Panc1 (cell line): ENCODE measurements at regions of chr17 and their contacts with region 1.

Region 1: GRCh38 chr17:49997791-49998703 is 3.0 kb upstream of the DLX3 start:
- DNase-seq: peak; percentile 30
- ATAC-seq: peak; percentile 78
- H3K4me3 ChIP-seq: peak overlapping the region; percentile 13 to 24; a peak in 3 of 4 replicates
- H3K27ac ChIP-seq: peak overlapping the region; percentile 72
- H3K4me1 ChIP-seq: peaks cover 19% of the 10 kb centered on the region
- H3K27me3 ChIP-seq: no peaks in the 10 kb centered on the region
- CTCF ChIP-seq: peak; percentile 96

Region 2: GRCh38 chr17:49575579-49576087 is 422.4 kb before region 1 on chr17 and contains the start of gene NXPH3:
- CTCF ChIA-PET with region 1: no interaction called
- POLR2A ChIA-PET with region 1: no interaction called
- in situ Hi-C with region 1: no loop called
- intact Hi-C with region 1: loop called (anchors 5 kb)
- DNase-seq: no peak
- ATAC-seq: peak; percentile 83
- H3K4me3 ChIP-seq: peak within 1 kb of the TSS; percentile 50 to 69
- H3K27ac ChIP-seq: no peak within 1 kb of the TSS
- H3K4me1 ChIP-seq: peaks cover 11% of the 10 kb centered on the region
- H3K27me3 ChIP-seq: no peaks in the 10 kb centered on the region
- CTCF ChIP-seq: peak; percentile 96
- total RNA-seq, gene NXPH3: 0.57 TPM

Region 3: DNA sequence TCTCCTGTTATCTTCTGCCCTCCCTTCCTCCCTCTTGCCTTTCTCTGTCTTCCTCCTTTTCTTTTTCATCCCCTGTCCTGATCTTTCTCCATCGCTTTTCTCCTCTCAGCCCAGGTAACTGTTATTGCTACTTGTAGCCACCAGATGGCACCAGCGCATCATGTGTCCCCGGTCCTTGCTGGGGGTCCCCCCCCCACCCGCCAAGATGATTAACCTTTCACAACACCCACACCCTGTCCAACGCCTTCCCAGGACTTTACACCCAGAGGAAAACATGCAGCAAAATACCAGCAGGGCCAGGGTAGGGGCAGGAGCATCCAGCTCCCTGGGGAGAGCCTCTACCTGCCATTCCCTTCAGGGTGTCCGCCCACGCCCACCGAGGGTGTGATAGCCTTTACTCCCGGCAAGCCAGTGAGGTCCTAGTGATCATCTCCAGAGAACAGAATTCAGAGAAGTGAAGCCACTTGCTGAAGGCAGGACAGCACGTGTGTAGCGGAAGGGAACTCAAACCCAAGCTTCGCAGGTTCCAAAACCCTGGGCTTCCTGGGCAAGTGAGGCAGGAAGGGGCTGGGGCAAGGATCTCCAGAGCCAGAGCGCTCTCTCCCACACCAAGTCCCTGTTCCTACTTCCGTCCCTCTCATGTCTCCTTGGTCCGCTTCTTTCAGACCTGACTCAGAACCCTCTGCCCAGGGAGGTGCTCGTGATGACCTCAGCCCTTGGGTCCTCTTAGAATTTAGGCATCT is 136.7 kb before region 1 on chr17:
- CTCF ChIA-PET with region 1: interaction called, 55 read pairs
- POLR2A ChIA-PET with region 1: no interaction called
- in situ Hi-C with region 1: no loop called
- intact Hi-C with region 1: loop called (anchors 1 kb)
- DNase-seq: no peak
- ATAC-seq: peak; percentile 55
- H3K4me3 ChIP-seq: no peak overlapping the region
- H3K27ac ChIP-seq: no peak overlapping the region
- H3K4me1 ChIP-seq: peaks cover 3% of the 10 kb centered on the region; the same call in 1 of the 2 replicates
- H3K27me3 ChIP-seq: no peaks in the 10 kb centered on the region
- CTCF ChIP-seq: peak; percentile 93

Region 4: GRCh38 chr17:49899191-49899485 is 98.9 kb before region 1 on chr17:
- CTCF ChIA-PET with region 1: interaction called, 21 read pairs
- POLR2A ChIA-PET with region 1: interaction called, 3 read pairs
- in situ Hi-C with region 1: no loop called
- intact Hi-C with region 1: no loop called
- DNase-seq: no peak
- ATAC-seq: peak; percentile 67
- H3K4me3 ChIP-seq: no peak overlapping the region
- H3K27ac ChIP-seq: no peak overlapping the region
- H3K4me1 ChIP-seq: peaks cover 6% of the 10 kb centered on the region; the same call in 1 of the 2 replicates
- H3K27me3 ChIP-seq: peaks cover 13% of the 10 kb centered on the region
- CTCF ChIP-seq: no peak; the same call in 1 of the 2 replicates

Region 5: GRCh38 chr17:49952209-49952911 is 45.7 kb before region 1 on chr17:
- CTCF ChIA-PET with region 1: interaction called, 32 read pairs
- POLR2A ChIA-PET with region 1: interaction called, 5 read pairs
- in situ Hi-C with region 1: no loop called
- intact Hi-C with region 1: loop called (anchors 2 kb)
- DNase-seq: peak; percentile 48
- ATAC-seq: peak; percentile 95
- H3K4me3 ChIP-seq: no peak overlapping the region
- H3K27ac ChIP-seq: no peak overlapping the region
- H3K4me1 ChIP-seq: peaks cover 4% of the 10 kb centered on the region; the same call in 1 of the 2 replicates
- H3K27me3 ChIP-seq: no peaks in the 10 kb centered on the region; the same call in 1 of the 2 replicates
- CTCF ChIP-seq: peak; percentile 98

Region 6: DNA sequence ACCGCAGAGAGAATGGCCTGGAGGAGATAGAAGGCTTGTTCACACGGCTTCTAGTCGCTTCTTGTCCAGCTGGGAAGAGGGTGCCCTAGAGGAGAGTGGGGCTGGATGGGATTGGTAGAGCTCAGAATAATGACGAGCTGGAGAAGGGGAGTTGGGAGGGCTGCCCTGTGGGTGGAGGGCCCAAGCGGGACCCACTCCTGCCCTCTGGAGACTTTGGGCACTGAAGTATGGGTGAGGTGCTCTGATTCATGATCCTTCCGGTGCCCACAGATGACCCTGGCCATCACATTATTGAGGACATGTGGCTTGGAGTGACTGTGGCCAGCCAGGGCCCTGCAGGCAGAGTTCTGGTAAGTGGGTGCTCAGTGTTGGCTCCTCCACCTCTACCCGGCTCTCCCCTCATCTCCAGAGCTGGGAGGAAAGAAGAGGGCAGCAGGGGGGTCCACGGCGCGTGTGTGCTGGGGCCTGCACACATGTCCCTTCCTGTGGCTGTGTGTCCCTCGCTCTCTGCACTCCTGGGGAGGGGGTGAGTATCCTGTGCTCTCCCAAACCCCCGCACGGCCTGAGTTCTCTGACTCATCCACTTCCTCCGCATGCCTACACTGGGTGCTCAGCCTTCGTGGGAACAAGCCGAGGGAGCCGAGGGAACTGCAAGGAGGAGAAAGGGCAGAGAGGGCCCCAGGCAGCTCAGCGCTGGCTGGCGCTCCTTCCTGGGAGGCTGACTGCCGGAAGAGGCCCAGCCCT is 66.4 kb after region 1 on chr17:
- CTCF ChIA-PET with region 1: interaction called, 4 read pairs
- POLR2A ChIA-PET with region 1: interaction called, 15 read pairs
- in situ Hi-C with region 1: no loop called
- intact Hi-C with region 1: no loop called
- DNase-seq: peak; percentile 87
- ATAC-seq: peak; percentile 77
- H3K4me3 ChIP-seq: peak overlapping the region in 1 of 2 experiments; percentile 9; a peak in 2 of 4 replicates
- H3K27ac ChIP-seq: peak overlapping the region; percentile 99
- H3K4me1 ChIP-seq: peaks cover 73% of the 10 kb centered on the region
- H3K27me3 ChIP-seq: no peaks in the 10 kb centered on the region
- CTCF ChIP-seq: no peak